HEK293 (cell line): ENCODE measurements at regions of chr6 and their contacts with region 1.

Region 1: GRCh38 chr6:145814501-145815308 is at the start of gene FBXO30:
- H3K4me3 ChIP-seq: peak within 1 kb of the TSS; percentile 61
- H3K27ac ChIP-seq: peak within 1 kb of the TSS; percentile 83
- H3K4me1 ChIP-seq: peaks cover 5% of the 10 kb centered on the region
- CTCF ChIP-seq: peak; percentile 37; the same call in 1 of the 2 replicates

Region 2: DNA sequence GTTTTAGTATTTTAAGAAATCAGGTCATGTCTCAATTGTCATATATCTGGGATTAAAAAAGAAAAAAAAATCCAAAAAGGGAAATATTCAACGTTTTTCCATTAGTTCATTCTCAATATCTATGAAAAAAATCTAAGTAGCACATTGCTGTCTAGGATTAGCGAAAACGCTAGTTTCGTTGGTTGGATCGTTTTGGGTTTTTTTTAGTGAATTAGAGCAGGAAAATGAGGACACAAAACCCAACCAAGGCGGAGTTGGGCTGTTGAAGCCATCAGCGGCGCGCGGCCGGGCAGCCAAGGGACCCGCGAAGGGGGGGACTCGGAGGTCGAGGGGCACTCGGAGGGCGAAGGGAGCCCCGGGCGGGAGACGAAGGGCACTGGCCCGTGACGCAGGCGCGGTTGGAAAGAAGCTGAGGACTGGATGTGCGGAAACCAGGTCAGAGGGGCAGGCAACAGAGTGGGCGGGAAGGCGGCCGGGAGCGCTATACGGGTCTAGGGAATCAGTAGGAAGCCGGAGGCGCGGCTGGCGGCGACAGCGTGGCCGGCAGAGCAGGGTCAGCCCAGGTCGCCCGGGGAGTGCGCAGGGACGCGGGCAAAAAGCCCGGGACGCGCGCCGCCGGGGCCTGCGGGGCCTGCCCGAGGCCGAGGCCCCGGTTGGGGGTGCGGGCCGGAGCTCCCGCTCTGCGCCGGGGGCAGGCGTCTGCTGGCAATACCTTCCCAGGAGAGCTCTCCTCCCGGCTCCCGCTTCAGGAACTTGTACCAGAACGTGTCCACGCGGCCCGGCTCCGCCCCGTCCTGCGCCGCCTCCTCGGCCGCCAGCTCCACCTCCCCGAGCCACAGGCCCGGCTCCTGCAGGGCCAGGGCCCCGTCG is 80.0 kb before region 1 on chr6:
- CTCF ChIA-PET with region 1: interaction called, 3 read pairs
- POLR2A ChIA-PET with region 1: interaction called, 53 read pairs
- H3K4me3 ChIP-seq: peak overlapping the region; percentile 55
- H3K27ac ChIP-seq: peak overlapping the region; percentile 96
- H3K4me1 ChIP-seq: peaks cover 4% of the 10 kb centered on the region; the same call in 1 of the 2 replicates
- CTCF ChIP-seq: peak; percentile 26; the same call in 1 of the 2 replicates

Region 3: GRCh38 chr6:145749632-145750031 is 65.1 kb before region 1 on chr6:
- CTCF ChIA-PET with region 1: no interaction called
- POLR2A ChIA-PET with region 1: no interaction called
- H3K4me3 ChIP-seq: no peak overlapping the region
- H3K27ac ChIP-seq: no peak overlapping the region
- H3K4me1 ChIP-seq: no peaks in the 10 kb centered on the region
- CTCF ChIP-seq: no peak

Region 4: GRCh38 chr6:145963216-145964068 is 148.7 kb after region 1 on chr6:
- CTCF ChIA-PET with region 1: no interaction called
- POLR2A ChIA-PET with region 1: interaction called, 14 read pairs
- H3K4me3 ChIP-seq: peak overlapping the region; percentile 95
- H3K27ac ChIP-seq: peak overlapping the region; percentile 58; the same call in 1 of the 2 replicates
- H3K4me1 ChIP-seq: no peaks in the 10 kb centered on the region
- CTCF ChIP-seq: no peak

Region 5: GRCh38 chr6:146224988-146225387 is 410.3 kb after region 1 on chr6:
- CTCF ChIA-PET with region 1: no interaction called
- POLR2A ChIA-PET with region 1: no interaction called
- H3K4me3 ChIP-seq: no peak overlapping the region
- H3K27ac ChIP-seq: no peak overlapping the region
- H3K4me1 ChIP-seq: no peaks in the 10 kb centered on the region
- CTCF ChIP-seq: no peak

Region 6: DNA sequence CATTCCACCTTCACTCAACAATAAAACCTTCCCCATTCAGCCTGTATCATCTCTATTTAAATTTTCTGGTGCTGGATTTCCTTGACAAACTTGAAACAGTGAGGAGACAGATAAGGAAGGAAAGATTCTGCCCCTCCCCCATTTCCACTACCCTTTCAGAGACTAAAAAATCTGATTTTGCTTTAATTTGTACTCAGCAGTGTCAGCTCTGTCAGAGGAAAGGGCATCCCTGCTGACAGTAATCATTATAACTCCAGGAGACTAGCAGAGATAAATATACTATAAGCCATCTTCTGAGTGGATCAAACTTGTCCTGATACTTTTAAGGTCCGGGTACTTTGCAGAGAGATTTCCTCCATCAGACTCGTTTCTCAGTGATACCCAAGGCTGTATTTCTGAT is 1849.4 kb after region 1 on chr6:
- CTCF ChIA-PET with region 1: no interaction called
- POLR2A ChIA-PET with region 1: interaction called, 11 read pairs
- H3K4me3 ChIP-seq: no peak overlapping the region
- H3K27ac ChIP-seq: no peak overlapping the region
- H3K4me1 ChIP-seq: 0 out of 2 replicates have a peak, but pooled peaks cover 3% of the 10 kb centered on the region
- CTCF ChIP-seq: no peak